Pancreas (tissue), 10 donors: ENCODE measurements at regions of chr2 and their contacts with region 1.

Region 1: DNA sequence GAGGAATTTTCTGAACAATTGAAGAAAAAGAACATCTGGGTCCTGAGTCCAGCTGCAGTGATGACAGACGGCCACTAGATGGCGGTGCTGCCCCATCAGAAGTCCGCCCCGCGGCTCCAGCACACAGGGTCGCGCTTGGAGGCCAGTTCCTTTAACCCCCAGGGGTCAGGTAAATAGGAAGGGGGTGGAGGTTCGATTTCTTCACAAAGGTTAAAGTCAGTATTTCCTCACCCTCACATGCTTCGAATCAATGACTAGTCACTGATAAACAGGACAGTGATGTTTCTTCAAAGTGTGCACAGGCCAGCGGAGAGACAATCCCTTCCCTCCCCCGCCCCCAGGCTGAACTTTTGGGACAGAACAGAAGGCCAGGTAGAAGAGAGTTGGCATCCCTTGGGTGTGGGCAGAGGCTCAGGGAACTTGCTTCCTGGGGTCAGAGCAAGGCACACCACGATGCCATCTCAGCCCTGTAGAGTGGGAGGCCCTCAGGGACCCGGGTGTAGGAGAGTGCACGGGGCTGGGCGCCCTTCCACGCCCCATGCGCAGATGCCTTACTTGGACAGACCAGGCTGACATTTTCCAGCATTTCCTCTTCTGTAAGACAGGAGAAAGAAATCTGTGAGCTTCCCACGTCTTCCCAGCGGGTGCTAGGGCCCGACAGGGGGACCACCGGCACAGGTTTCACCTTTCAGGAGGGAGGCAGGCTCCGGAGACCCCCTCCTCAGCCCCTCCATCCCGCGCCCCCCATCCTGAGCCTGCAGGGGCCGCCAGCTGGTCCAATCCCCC is 722 bp downstream of the APOB start:
- DNase-seq: peak; percentile 10 to 84 (median 63)
- ATAC-seq: peak; percentile 73 to 91 (median 82)
- H3K4me3 ChIP-seq: no peak overlapping the region
- H3K27ac ChIP-seq: no peak overlapping the region
- H3K4me1 ChIP-seq: peaks cover 0 to 10% (median 0%) of the 10 kb centered on the region in 3 donors
- H3K27me3 ChIP-seq: peaks cover 0 to 5% (median 0%) of the 10 kb centered on the region in 4 donors
- CTCF ChIP-seq: peak; percentile 95 to 98 (median 98)

Region 2: GRCh38 chr2:20438334-20439192 is 604.6 kb before region 1 on chr2:
- intact Hi-C with region 1: no loop called
- DNase-seq: peak in 2 of 6 donors; percentile 22 to 46
- ATAC-seq: peak; percentile 75 to 88 (median 78)
- H3K4me3 ChIP-seq: peak overlapping the region in 1 of 4 donors; percentile 17
- H3K27ac ChIP-seq: peak overlapping the region; percentile 1 to 76 (median 56)
- H3K4me1 ChIP-seq: peaks cover 4 to 27% (median 21%) of the 10 kb centered on the region in 3 donors
- H3K27me3 ChIP-seq: no peaks in the 10 kb centered on the region
- CTCF ChIP-seq: no peak

Region 3: GRCh38 chr2:21111012-21111411 is 67.9 kb after region 1 on chr2:
- intact Hi-C with region 1: loop called in 2 of 3 experiments (anchors 5 kb)
- DNase-seq: no peak
- ATAC-seq: no peak
- H3K4me3 ChIP-seq: no peak overlapping the region
- H3K27ac ChIP-seq: no peak overlapping the region
- H3K4me1 ChIP-seq: no peaks in the 10 kb centered on the region
- H3K27me3 ChIP-seq: no peaks in the 10 kb centered on the region
- CTCF ChIP-seq: no peak

Region 4: DNA sequence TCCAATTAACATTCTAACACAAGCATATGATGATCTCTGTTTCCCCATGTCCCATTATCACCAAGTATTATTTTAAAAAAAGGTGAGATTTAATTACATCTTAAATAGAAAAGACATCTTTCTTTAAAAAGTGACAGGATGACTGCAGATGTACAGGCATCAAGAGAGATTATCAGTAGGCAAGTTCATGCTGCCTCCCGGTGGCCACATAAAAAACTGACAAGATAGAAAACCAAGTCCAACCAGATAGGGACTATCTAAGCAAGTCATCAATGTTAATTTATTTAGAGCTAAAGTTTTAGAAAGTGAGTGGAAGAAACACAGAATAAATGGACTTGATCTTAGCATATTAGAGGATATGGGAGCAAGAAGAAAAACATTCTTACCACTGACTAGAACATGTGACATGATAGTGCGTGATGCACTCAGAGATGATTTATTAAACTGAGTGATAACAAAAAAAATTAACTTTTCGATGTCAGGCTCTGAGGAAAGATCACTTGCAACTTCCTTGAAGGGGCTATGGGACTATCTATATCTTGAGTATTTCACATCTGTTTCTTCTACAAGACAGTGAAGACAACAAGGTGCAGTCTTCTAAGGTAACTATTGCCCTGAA is 75.3 kb after region 1 on chr2:
- intact Hi-C with region 1: loop called in 2 of 3 experiments (anchors 5 kb)
- DNase-seq: peak in 1 of 6 donors; percentile 15
- ATAC-seq: peak in 2 of 4 donors; percentile 42 to 47
- H3K4me3 ChIP-seq: no peak overlapping the region
- H3K27ac ChIP-seq: no peak overlapping the region
- H3K4me1 ChIP-seq: no peaks in the 10 kb centered on the region
- H3K27me3 ChIP-seq: peaks cover 0 to 2% (median 0%) of the 10 kb centered on the region in 4 donors
- CTCF ChIP-seq: peak in 1 of 4 donors; percentile 12

Region 5: DNA sequence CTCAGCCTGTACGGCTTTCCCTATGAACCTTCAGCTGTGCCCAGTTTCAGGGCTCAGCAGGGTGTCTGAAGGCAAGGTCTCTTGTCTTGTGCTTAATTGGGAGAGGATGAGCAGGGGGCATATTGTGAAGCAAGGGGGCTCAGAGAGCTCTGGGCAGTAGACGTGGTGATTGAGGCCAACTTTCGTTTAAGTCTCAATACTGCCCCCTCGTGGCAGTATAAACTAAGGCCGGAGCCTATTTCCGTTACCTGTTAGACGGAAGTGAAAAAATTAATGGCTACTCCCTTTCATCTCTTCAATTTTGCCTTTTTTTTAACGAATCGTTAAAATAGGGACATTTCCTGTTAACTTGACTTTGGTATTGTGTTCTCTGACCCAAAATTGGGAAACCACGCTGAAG is 274.0 kb after region 1 on chr2:
- intact Hi-C with region 1: loop called in 1 of 3 experiments (anchors 10 kb)
- DNase-seq: peak in 4 of 6 donors; percentile 22 to 54 (median 32)
- ATAC-seq: peak; percentile 58 to 69 (median 64)
- H3K4me3 ChIP-seq: no peak overlapping the region
- H3K27ac ChIP-seq: peak overlapping the region in 1 of 4 donors; percentile 40
- H3K4me1 ChIP-seq: no peaks in the 10 kb centered on the region
- H3K27me3 ChIP-seq: no peaks in the 10 kb centered on the region
- CTCF ChIP-seq: peak; percentile 54 to 67 (median 59)

Region 6: GRCh38 chr2:21467910-21468309 is 424.8 kb after region 1 on chr2:
- intact Hi-C with region 1: no loop called
- DNase-seq: no peak
- ATAC-seq: no peak
- H3K4me3 ChIP-seq: no peak overlapping the region
- H3K27ac ChIP-seq: no peak overlapping the region
- H3K4me1 ChIP-seq: no peaks in the 10 kb centered on the region
- H3K27me3 ChIP-seq: no peaks in the 10 kb centered on the region
- CTCF ChIP-seq: no peak